ENCODE measurements at regions of chr12 and their contacts with region 1.

Region 1: DNA sequence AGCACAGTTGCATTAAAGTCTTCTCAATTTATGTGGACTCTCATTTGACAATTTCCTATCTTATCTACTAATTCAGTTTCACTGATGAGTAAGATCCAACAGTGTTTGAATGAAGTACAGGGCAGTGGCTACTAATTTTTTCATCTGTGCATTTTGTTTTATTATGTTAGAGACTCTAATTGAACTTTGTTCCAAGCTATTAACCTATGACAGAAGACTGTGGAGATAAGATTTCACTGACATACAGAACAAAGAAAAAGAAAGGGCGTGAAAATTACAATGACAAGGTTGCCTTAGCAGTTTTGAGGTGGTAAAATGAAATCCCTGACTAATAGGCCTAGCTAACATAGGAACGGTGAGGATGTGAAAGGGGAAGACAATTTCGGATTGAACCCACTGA is 153.2 kb upstream of the SOX5 start:
- DNase-seq: no peak
- ATAC-seq: no peak
- H3K4me3 Mint-ChIP-seq: no peak overlapping the region
- H3K27ac Mint-ChIP-seq: no peak overlapping the region
- H3K4me1 Mint-ChIP-seq: no peaks in the 10 kb centered on the region
- H3K27me3 Mint-ChIP-seq: no peaks in the 10 kb centered on the region
- CTCF ChIP-seq: no peak

Region 2: GRCh38 chr12:24078318-24078765 is 24.3 kb before region 1 on chr12:
- CTCF ChIA-PET with region 1: no interaction called
- POLR2A ChIA-PET with region 1: interaction called, 11 read pairs
- intact Hi-C with region 1: no loop called
- DNase-seq: no peak
- ATAC-seq: no peak
- H3K4me3 Mint-ChIP-seq: no peak overlapping the region
- H3K27ac Mint-ChIP-seq: no peak overlapping the region
- H3K4me1 Mint-ChIP-seq: no peaks in the 10 kb centered on the region
- H3K27me3 Mint-ChIP-seq: no peaks in the 10 kb centered on the region
- CTCF ChIP-seq: no peak